Activated naive CD4-positive, alpha-beta T cell treated with anti-CD3 and anti-CD28 coated beads for 36 hours (primary cell): ENCODE measurements at regions of chr1 and their contacts with region 1.

Region 1: GRCh38 chr1:205141236-205142101 is 19.7 kb upstream of the RBBP5 start:
- DNase-seq: peak; percentile 92
- H3K4me3 Mint-ChIP-seq: no peak overlapping the region
- H3K27ac Mint-ChIP-seq: no peak overlapping the region
- H3K4me1 Mint-ChIP-seq: peaks cover 7% of the 10 kb centered on the region
- H3K27me3 Mint-ChIP-seq: no peaks in the 10 kb centered on the region

Region 2: GRCh38 chr1:204975570-204976235 is 165.8 kb before region 1 on chr1:
- CTCF ChIA-PET with region 1: interaction called, 11 read pairs
- intact Hi-C with region 1: loop called (anchors 1 kb)
- DNase-seq: peak; percentile 74
- H3K4me3 Mint-ChIP-seq: no peak overlapping the region
- H3K27ac Mint-ChIP-seq: no peak overlapping the region
- H3K4me1 Mint-ChIP-seq: no peaks in the 10 kb centered on the region
- H3K27me3 Mint-ChIP-seq: peaks cover 2% of the 10 kb centered on the region

Region 3: DNA sequence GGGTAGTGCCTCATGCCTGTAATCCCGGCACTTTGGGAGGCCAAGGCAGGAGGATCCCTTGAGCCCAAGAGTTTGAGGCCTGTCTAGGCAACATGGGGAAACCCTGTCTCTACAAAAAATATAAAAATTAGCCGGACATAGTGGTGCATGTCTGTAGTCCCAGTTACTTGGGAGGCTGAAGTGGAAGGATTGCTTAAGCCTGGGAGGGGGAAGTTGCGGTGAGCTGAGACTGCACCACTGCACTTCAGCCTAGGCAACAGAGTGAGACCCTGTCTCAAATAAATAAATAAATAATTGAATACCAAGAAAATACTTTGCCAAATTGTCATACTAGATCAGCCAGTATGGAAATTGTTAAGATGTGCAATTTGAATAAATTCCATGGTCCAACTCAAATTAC is 13.8 kb before region 1 on chr1:
- CTCF ChIA-PET with region 1: interaction called, 16 read pairs
- intact Hi-C with region 1: loop called (anchors 1 kb)
- DNase-seq: no peak
- H3K4me3 Mint-ChIP-seq: no peak overlapping the region
- H3K27ac Mint-ChIP-seq: no peak overlapping the region
- H3K4me1 Mint-ChIP-seq: peaks cover 4% of the 10 kb centered on the region
- H3K27me3 Mint-ChIP-seq: no peaks in the 10 kb centered on the region